ENCODE measurements at regions of chr9 and their contacts with region 1.

Region 1: GRCh38 chr9:109101810-109102209 is 17.9 kb downstream of the TMEM245 start:
- DNase-seq: peak; percentile 75
- H3K4me3 Mint-ChIP-seq: peak overlapping the region; percentile 69
- H3K27ac Mint-ChIP-seq: peak overlapping the region; percentile 89
- H3K4me1 Mint-ChIP-seq: peaks cover 53% of the 10 kb centered on the region
- H3K27me3 Mint-ChIP-seq: no peaks in the 10 kb centered on the region

Region 2: GRCh38 chr9:108933718-108934322 is 168.0 kb before region 1 on chr9 and contains the start of gene ELP1:
- intact Hi-C with region 1: loop called (anchors 5 kb)
- DNase-seq: peak; percentile 98
- H3K4me3 Mint-ChIP-seq: peak within 1 kb of the TSS; percentile 97
- H3K27ac Mint-ChIP-seq: peak within 1 kb of the TSS; percentile 99
- H3K4me1 Mint-ChIP-seq: peaks cover 26% of the 10 kb centered on the region
- H3K27me3 Mint-ChIP-seq: no peaks in the 10 kb centered on the region
- total RNA-seq, gene ELP1: 35.2 and 36.2 TPM in 2 replicates

Region 3: GRCh38 chr9:109119439-109120203 is 17.8 kb after region 1 on chr9 and contains the start of gene TMEM245:
- intact Hi-C with region 1: loop called (anchors 1 kb)
- DNase-seq: peak; percentile 98
- H3K4me3 Mint-ChIP-seq: peak within 1 kb of the TSS; percentile 90
- H3K27ac Mint-ChIP-seq: peak within 1 kb of the TSS; percentile 94
- H3K4me1 Mint-ChIP-seq: peaks cover 38% of the 10 kb centered on the region
- H3K27me3 Mint-ChIP-seq: no peaks in the 10 kb centered on the region
- total RNA-seq, gene TMEM245: 26.7 and 27.0 TPM in 2 replicates

Region 4: DNA sequence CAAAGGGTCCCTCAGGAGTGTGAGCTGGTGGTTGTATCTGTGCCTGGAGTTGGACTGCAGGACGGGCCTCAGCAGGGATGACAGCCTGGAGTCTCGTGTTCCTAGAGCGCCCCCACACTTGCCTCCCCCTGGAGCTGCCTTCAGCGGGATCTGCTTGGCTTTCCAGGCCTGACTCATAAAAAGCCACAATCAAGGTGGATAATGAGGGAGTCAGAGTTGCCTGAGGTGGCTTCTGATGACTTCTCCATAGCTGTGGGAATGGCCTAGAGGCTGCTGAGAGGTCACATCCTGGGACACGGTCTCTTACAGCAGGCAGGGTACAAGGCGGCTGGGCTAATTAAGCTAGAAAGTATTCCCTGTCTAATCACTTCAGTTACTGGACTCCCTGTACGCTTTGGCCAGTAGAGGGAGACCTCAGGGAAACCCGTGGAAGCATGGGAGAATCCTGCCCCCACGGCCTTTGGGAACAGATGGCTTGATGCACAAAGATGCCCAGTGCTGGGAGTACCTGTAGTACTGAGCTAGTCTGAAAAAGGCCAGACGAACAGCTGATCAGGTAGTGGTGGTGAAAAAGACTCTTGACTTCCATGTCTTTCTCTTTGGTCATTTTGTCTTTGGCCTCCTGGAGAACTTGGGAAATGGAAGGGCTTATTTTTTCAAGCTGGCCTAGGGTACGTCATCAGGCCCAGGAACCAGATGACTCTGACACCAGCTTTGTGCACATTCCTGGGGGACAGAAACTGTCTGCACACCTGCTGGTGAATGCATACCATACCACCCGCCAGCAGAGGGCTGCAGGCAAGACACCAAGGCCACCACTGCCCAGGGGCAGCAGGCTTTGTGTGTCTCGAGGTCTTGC is 81.4 kb after region 1 on chr9:
- intact Hi-C with region 1: loop called (anchors 2 kb)
- DNase-seq: peak; percentile 68
- H3K4me3 Mint-ChIP-seq: no peak overlapping the region
- H3K27ac Mint-ChIP-seq: no peak overlapping the region
- H3K4me1 Mint-ChIP-seq: peaks cover 13% of the 10 kb centered on the region
- H3K27me3 Mint-ChIP-seq: peaks cover 28% of the 10 kb centered on the region

Region 5: DNA sequence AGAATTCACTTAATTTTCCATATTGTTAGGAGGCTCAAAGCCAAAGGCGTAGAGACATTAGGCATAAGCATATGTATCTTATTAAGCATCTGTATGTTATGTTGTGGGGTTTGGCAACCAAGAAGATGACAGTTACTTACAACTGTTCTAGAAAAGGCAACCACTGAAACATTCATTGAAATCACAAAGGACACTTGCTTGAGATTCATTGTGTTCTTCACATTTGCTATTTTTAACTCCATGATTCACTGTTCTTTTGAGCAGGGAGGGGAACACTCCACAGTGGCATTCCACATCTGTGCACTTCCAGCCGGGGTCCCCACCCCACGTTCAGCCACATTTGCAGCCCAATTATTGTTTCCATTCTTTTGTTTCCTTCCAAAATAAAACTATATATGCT is 785.3 kb after region 1 on chr9:
- intact Hi-C with region 1: loop called (anchors 5 kb)
- DNase-seq: no peak
- H3K4me3 Mint-ChIP-seq: peak overlapping the region; percentile 75
- H3K27ac Mint-ChIP-seq: peak overlapping the region; percentile 94
- H3K4me1 Mint-ChIP-seq: peaks cover 69% of the 10 kb centered on the region
- H3K27me3 Mint-ChIP-seq: no peaks in the 10 kb centered on the region

Measured in activated CD4-positive, alpha-beta T cell treated with anti-CD3 and anti-CD28 coated beads, Interleukin-2, amount 10 ng/mL, durations not matched to agents 24 days and 14 days (primary cell).